Activated CD4-positive, alpha-beta memory T cell treated with anti-CD3 and anti-CD28 coated beads, Interleukin-2, amount 10 ng/mL, durations not matched to agents 7 days and 5 days (primary cell): ENCODE measurements at regions of chr11 and their contacts with region 1.

Region 1: DNA sequence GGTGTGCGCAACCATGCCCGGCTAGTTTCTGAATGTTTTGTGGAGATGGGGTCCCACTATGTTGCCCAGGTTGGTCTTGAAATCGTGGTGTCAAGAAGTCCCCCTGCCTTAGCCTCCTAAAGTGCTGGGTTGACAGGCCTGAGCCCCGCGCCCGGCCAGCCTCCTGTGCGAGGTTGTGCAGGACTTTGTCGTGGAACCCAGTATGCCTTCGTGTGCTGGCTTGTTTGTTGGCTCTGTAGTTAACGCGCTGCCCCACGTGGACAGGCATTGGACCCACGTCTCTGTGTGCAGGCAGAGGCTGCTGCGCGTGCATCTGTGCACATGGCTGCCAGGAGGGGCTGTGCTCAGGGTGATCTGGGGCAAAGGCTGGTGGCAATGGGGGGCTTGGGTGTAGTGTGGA is 33.9 kb upstream of the ZNF195 start:
- DNase-seq: no peak
- H3K4me3 Mint-ChIP-seq: no peak overlapping the region
- H3K27ac Mint-ChIP-seq: no peak overlapping the region
- H3K4me1 Mint-ChIP-seq: peaks cover 2% of the 10 kb centered on the region
- H3K27me3 Mint-ChIP-seq: peaks cover 3% of the 10 kb centered on the region

Region 2: GRCh38 chr11:3341298-3341697 is 71.5 kb before region 1 on chr11:
- CTCF ChIA-PET with region 1: interaction called, 29 read pairs
- POLR2A ChIA-PET with region 1: no interaction called
- DNase-seq: peak; percentile 63
- H3K4me3 Mint-ChIP-seq: no peak overlapping the region
- H3K27ac Mint-ChIP-seq: no peak overlapping the region
- H3K4me1 Mint-ChIP-seq: no peaks in the 10 kb centered on the region
- H3K27me3 Mint-ChIP-seq: peaks cover 50% of the 10 kb centered on the region

Region 3: GRCh38 chr11:3378426-3379423 is 34.1 kb before region 1 on chr11 and contains the start of gene ZNF195:
- CTCF ChIA-PET with region 1: interaction called, 13 read pairs
- POLR2A ChIA-PET with region 1: interaction called, 3 read pairs
- DNase-seq: peak; percentile 98
- H3K4me3 Mint-ChIP-seq: peak within 1 kb of the TSS; percentile 99
- H3K27ac Mint-ChIP-seq: peak within 1 kb of the TSS; percentile 95
- H3K4me1 Mint-ChIP-seq: peaks cover 39% of the 10 kb centered on the region
- H3K27me3 Mint-ChIP-seq: no peaks in the 10 kb centered on the region
- total RNA-seq, gene ZNF195: 30.5 to 33.5 TPM